ENCODE measurements at regions of chr9 and their contacts with region 1.

Region 1: DNA sequence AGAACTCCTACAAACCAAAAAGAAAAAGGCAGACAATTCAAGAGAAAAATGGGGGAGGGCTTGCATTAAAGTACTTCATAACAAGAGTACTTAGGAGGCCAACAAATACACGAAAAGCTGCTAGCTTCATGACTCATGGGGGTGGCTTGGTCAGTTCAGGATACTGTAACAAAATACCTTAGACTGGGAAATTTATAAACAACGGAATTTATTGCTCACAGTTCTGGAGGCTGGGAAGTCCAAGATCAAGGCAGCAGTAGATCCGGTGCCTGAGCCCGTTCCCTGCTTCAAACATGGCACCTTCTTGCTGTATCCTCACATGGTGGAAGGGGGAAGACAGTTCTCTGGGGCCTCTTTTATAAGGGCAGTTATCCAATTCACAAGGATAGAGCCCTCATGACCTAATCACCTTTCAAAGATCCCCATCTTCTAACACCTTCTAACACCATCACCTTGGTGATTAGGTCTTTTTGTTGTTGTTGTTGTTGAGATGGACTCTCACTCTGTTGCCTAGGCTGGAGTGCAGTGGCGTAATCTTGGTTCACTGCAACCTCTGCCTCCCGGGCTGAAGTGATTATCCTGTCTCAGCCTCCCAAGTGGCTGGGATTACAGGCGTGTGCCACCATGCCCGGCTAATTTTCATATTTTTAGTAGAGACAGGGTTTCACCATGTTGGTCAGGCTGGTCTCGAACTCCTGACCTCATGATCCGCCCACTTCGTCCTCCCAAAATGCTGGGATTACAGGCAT is 111.2 kb downstream of the C9orf50 start:
- DNase-seq: peak; percentile 25

Region 2: DNA sequence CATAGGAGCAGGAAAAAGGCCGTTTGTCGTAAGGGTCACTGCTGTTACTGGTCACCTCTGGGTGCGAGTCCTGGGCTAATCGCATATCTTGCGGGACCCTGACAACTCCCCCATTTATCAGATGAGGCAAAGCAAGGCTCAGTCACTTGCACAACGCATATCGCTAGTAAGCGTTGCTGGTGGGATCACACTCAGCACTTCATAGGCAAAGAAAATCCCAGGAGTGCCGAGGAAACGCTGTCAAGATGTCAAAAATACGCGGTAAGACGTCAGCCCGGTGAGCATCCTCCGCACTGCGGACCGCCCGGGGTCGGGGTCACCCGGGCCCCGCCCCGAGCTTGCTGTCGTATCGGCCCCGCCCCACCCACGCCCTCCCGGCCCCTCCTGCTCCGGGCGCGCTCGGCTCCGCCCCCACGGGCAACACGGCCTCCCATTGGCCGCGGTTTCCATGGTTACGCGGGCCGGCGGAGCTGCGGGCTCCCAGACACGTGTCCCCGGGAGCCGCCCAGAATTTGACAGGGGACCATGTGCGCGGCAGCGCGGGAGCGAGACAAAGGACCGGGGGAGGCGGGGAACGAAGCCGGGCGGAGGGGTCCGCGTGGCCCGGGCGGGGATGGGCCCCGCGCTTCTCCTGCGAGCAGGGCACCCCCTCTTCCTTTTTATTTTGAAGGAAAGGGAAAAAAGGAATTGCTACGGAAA is 251.4 kb before region 1 on chr9:
- intact Hi-C with region 1: no loop called
- DNase-seq: peak; percentile 98

Region 3: GRCh38 chr9:129557192-129558036 is 47.7 kb after region 1 on chr9:
- intact Hi-C with region 1: loop called in 1 of 2 experiments (anchors 5 kb)
- DNase-seq: no peak

Measured in posterior vena cava (tissue), 2 donors.